ENCODE measurements at regions of chr9 and their contacts with region 1.

Region 1: GRCh38 chr9:83544002-83544698 is 5.9 kb upstream of the FRMD3 start:
- DNase-seq: no peak
- H3K4me3 ChIP-seq: no peak overlapping the region
- H3K27ac ChIP-seq: no peak overlapping the region
- H3K4me1 ChIP-seq: peaks cover 1 to 3% (median 2%) of the 10 kb centered on the region in 4 donors
- H3K27me3 ChIP-seq: no peaks in the 10 kb centered on the region
- CTCF ChIP-seq: peak; percentile 55 to 71 (median 61)
- EP300 ChIP-seq: no peak
- POLR2A ChIP-seq: no peak

Region 2: GRCh38 chr9:83238871-83239640 is 305.1 kb before region 1 on chr9:
- intact Hi-C with region 1: loop called (anchors 10 kb)
- DNase-seq: no peak
- H3K4me3 ChIP-seq: no peak overlapping the region
- H3K27ac ChIP-seq: no peak overlapping the region
- H3K4me1 ChIP-seq: peaks cover 0 to 13% (median 4%) of the 10 kb centered on the region in 4 donors
- H3K27me3 ChIP-seq: no peaks in the 10 kb centered on the region
- CTCF ChIP-seq: no peak
- EP300 ChIP-seq: no peak
- POLR2A ChIP-seq: no peak

Region 3: DNA sequence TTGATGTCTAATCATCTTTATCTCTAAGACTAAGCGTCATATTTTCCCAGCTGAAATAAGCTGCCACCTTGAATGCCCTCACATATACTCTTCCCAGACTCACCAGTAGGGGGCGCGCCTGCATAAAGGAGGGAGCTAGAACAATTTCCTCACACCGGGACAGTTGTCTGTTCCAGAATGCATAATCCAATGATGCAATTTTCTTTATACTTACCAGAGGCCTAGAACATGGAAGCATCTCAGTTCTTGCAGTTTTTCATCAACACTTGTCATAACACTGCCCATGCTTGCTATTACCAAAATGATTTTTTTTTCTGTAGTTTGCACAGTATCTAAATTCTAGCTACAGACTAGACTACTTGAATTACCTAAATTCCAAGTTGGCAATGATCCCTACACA is 209.8 kb before region 1 on chr9:
- intact Hi-C with region 1: loop called (anchors 2 kb)
- DNase-seq: no peak
- H3K4me3 ChIP-seq: no peak overlapping the region
- H3K27ac ChIP-seq: no peak overlapping the region
- H3K4me1 ChIP-seq: peaks cover 0 to 4% (median 0%) of the 10 kb centered on the region in 4 donors
- H3K27me3 ChIP-seq: no peaks in the 10 kb centered on the region
- CTCF ChIP-seq: peak; percentile 86 to 94 (median 89)
- EP300 ChIP-seq: no peak
- POLR2A ChIP-seq: no peak

Region 4: GRCh38 chr9:83601463-83601862 is 57.3 kb after region 1 on chr9:
- intact Hi-C with region 1: no loop called
- DNase-seq: no peak
- H3K4me3 ChIP-seq: no peak overlapping the region
- H3K27ac ChIP-seq: no peak overlapping the region
- H3K4me1 ChIP-seq: no peaks in the 10 kb centered on the region
- H3K27me3 ChIP-seq: no peaks in the 10 kb centered on the region
- CTCF ChIP-seq: no peak
- EP300 ChIP-seq: no peak
- POLR2A ChIP-seq: no peak